Sigmoid colon (tissue), 7 donors: ENCODE measurements at regions of chr20 and their contacts with region 1.

Region 1: GRCh38 chr20:19661717-19662636 is 96.1 kb upstream of the RIN2 start:
- DNase-seq: peak; percentile 80
- H3K4me3 ChIP-seq: no peak overlapping the region
- H3K27ac ChIP-seq: peak overlapping the region in 1 of 4 donors; percentile 42
- H3K4me1 ChIP-seq: peaks cover 0 to 9% (median 5%) of the 10 kb centered on the region in 4 donors
- H3K27me3 ChIP-seq: no peaks in the 10 kb centered on the region
- CTCF ChIP-seq: peak; percentile 92 to 98 (median 96)
- EP300 ChIP-seq: no peak
- POLR2A ChIP-seq: no peak

Region 2: DNA sequence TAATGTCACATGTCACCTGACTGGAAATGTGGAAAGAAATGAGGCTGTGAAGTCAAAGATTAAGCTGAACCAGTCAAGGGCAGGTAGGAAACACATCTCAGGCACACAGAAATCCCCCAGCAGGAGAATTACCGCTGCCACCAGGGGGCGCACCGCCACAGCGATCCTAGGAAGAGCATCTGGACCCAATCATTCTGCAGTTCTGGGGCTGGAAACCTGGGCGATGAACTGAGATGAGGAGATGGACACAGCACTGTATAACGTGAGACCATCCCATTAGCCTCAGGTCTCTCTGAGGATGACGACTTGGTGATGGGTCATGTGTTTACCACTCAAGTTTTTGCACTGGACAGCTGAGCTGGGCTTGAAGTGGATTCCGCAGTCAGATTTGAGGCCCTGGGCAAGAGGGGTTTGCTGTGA is 456.0 kb before region 1 on chr20:
- intact Hi-C with region 1: loop called (anchors 1 kb)
- DNase-seq: peak; percentile 83
- H3K4me3 ChIP-seq: no peak overlapping the region
- H3K27ac ChIP-seq: no peak overlapping the region
- H3K4me1 ChIP-seq: peaks cover 0 to 13% (median 7%) of the 10 kb centered on the region in 4 donors
- H3K27me3 ChIP-seq: no peaks in the 10 kb centered on the region
- CTCF ChIP-seq: peak; percentile 53 to 88 (median 82)
- EP300 ChIP-seq: no peak
- POLR2A ChIP-seq: no peak

Region 3: DNA sequence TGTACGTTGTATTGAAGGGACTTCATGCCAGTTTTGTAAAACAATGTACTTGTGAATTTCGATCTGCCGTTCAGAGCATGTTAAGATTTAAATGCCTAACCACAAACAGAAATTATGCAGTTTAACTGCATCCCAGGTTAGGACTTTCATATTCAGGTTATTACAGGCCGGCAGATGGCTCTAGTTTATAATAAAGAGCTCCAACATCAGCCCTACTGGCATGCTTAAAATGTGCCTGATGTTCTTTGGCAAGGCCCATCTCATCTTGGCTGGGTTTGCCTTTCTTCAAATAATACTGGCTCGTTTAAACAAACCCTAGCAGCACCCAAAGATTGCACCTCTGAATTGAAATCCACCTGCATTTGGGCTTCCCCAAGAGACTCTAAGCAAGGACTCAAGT is 73.2 kb before region 1 on chr20:
- intact Hi-C with region 1: loop called (anchors 5 kb)
- DNase-seq: peak; percentile 74
- H3K4me3 ChIP-seq: no peak overlapping the region
- H3K27ac ChIP-seq: peak overlapping the region in 3 of 4 donors; percentile 31 to 62 (median 34)
- H3K4me1 ChIP-seq: peaks cover 0 to 22% (median 19%) of the 10 kb centered on the region in 4 donors
- H3K27me3 ChIP-seq: no peaks in the 10 kb centered on the region
- CTCF ChIP-seq: peak in 2 of 4 experiments; percentile 10 to 36
- EP300 ChIP-seq: no peak
- POLR2A ChIP-seq: no peak